ENCODE measurements at regions of chr7 and their contacts with region 1.

Region 1: GRCh38 chr7:74449809-74450397 is 3.8 kb upstream of the GTF2IRD1 start:
- DNase-seq: peak; percentile 88
- CTCF ChIP-seq: peak; percentile 79

Region 2: GRCh38 chr7:74115326-74115725 is 334.6 kb before region 1 on chr7:
- in situ Hi-C with region 1: no loop called
- DNase-seq: no peak
- CTCF ChIP-seq: no peak

Region 3: GRCh38 chr7:74173866-74174605 is 275.9 kb before region 1 on chr7 and contains the start of gene EIF4H:
- in situ Hi-C with region 1: no loop called
- DNase-seq: peak; percentile 95
- CTCF ChIP-seq: no peak

Region 4: GRCh38 chr7:74535951-74536356 is 86.1 kb after region 1 on chr7:
- in situ Hi-C with region 1: loop called (anchors 10 kb)
- DNase-seq: no peak
- CTCF ChIP-seq: no peak

Region 5: DNA sequence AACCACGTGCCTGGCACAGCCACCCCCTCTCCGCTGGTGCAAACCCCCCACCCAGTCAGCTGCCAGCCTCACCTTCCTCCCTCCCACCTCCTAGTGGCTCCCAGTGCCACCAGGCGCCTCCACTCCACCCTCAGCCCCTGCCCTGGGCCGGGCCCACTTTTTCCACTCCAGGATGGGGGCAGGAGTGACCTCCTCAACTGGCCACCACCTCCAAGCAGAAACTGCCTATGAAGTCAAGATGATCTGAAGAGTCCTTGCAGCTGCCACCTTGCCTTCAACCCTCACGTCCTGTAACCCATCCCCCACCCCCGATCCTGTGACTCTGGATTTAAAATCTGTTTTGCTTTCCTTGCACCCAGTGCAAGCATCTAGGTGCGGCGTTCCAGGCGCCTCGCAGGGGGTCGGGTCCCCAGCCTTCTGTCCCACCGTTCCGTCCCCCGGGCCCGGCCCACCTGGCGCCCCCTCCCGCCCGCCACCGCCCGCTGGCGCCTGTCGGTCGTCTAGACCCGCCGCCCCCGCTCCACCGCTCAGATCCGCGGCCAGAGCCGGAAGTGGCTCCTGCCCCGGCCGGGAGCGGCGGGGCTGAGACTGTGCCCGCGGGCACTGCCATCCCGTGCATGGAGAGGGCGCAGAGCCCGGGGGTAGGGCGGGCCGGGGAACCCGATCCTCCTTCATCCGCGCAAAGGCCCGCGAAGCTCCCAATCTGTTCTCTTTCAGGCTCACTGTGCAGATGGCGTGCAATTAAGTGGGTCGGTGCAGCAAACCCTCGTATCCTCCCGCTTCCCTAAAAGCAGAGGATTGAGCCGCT is 156.4 kb after region 1 on chr7:
- in situ Hi-C with region 1: no loop called
- DNase-seq: peak; percentile 74
- CTCF ChIP-seq: no peak